Heart left ventricle (tissue), 16 donors: ENCODE measurements at regions of chr1 and their contacts with region 1.

Region 1: DNA sequence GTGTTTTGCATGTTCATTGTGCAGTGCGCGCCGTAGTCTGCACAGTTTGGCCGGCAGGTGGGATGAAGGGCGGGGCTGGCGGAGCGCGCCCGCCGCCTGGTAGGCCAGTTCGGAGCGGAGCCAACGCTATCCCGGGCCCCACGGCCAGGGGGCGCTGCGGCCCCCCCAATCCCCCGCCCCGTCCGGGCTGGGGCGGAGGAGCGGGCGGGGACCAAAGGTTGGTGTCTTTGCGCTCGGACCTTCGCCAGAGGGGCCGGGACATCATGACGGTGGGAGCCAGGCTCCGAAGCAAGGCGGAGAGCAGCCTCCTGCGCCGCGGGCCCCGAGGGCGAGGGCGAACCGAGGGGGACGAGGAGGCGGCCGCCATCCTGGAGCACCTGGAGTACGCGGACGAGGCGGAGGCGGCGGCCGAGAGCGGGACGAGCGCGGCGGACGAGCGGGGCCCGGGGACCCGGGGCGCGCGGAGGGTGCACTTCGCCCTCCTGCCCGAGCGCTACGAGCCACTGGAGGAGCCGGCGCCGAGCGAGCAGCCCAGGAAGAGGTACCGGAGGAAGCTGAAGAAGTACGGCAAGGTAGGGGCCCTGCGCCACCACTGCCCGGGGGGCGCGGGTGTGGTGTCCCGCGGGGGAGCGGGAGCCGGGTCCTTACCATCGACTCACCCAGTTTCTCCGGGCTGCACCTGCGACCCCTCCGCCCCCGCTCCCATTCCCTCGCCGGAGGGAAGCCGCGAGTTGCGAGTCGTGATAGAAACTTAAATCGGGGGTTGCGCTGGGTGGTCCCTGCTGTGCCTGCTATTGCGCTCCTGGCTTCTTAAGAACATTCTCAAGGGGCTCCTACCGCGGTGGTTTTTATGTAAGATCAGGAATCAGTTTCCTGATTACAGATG is at the start of gene C1orf115:
- DNase-seq: peak; percentile 73 to 89 (median 77)
- ATAC-seq: peak; percentile 78 to 98 (median 94)
- H3K4me3 ChIP-seq: peak within 1 kb of the TSS; percentile 64 to 89 (median 82)
- H3K27ac ChIP-seq: peak within 1 kb of the TSS; percentile 11 to 89 (median 70)
- H3K4me1 ChIP-seq: peaks cover 0 to 17% (median 4%) of the 10 kb centered on the region in 12 donors
- H3K27me3 ChIP-seq: no peaks in the 10 kb centered on the region
- CTCF ChIP-seq: peak; percentile 96 to 99 (median 98)
- POLR2A ChIP-seq: peak in 1 of 2 donors; percentile 69
- total RNA-seq, gene C1orf115: 8.5 to 39.0 (median 15.4) TPM

Region 2: GRCh38 chr1:220733090-220733601 is 42.8 kb after region 1 on chr1:
- intact Hi-C with region 1: loop called (anchors 1 to 5 kb)
- DNase-seq: peak; percentile 73 to 86 (median 82)
- ATAC-seq: peak; percentile 92 to 96 (median 96)
- H3K4me3 ChIP-seq: peak overlapping the region in 10 of 12 donors; percentile 10 to 50 (median 38)
- H3K27ac ChIP-seq: peak overlapping the region; percentile 54 to 89 (median 79)
- H3K4me1 ChIP-seq: peaks cover 0 to 21% (median 5%) of the 10 kb centered on the region in 12 donors
- H3K27me3 ChIP-seq: no peaks in the 10 kb centered on the region
- CTCF ChIP-seq: peak; percentile 68 to 95 (median 88)
- POLR2A ChIP-seq: no peak

Region 3: GRCh38 chr1:220748089-220748934 is 57.9 kb after region 1 on chr1 and contains the start of gene MTARC2:
- intact Hi-C with region 1: loop called in 1 of 10 experiments (anchors 1 kb)
- DNase-seq: peak; percentile 87 to 90 (median 89)
- ATAC-seq: peak; percentile 97 to 98 (median 98)
- H3K4me3 ChIP-seq: peak within 1 kb of the TSS; percentile 53 to 100 (median 85)
- H3K27ac ChIP-seq: peak within 1 kb of the TSS; percentile 66 to 98 (median 92)
- H3K4me1 ChIP-seq: peaks cover 4 to 55% (median 36%) of the 10 kb centered on the region in 12 donors
- H3K27me3 ChIP-seq: peaks cover 0 to 4% (median 0%) of the 10 kb centered on the region in 9 donors
- CTCF ChIP-seq: no peak
- POLR2A ChIP-seq: peak in 1 of 2 donors; percentile 94
- total RNA-seq, gene MTARC2: 16.5 to 29.1 (median 24.2) TPM

Region 4: DNA sequence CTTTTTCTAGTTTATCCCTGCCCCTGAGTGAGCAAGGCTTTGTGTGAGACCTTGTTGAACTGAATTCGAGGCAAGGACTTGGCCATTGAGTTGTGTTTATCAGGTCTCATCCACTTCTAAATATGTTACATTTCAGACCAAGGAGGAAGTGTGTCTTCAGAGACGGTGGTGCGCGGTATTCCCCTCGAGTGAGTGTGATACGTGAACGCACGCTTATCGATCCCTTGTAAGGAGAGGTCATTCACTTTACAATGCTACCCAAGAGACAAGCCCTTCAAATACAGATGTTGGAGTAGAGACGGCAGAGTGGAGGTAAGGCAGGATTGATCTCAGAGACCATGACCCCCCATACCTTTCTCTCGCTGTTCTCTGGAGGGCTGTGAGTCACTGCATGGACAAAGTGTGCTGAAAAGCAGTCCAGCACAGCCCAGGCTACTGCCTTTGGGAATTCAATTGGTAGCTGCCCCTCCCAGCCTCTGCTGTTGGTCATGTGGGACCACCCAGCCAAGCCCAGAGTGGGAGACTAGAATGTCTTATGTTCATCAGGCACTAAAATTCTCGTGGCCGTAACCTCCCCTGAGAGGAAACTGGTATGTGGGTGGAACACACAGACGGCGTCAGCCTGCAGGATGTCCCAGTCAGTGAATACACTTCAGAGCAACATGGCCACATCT is 80.0 kb after region 1 on chr1:
- intact Hi-C with region 1: loop called in 2 of 10 experiments (anchors 5 kb)
- DNase-seq: peak in 1 of 5 donors; percentile 39
- ATAC-seq: peak in 3 of 4 donors; percentile 25 to 47 (median 36)
- H3K4me3 ChIP-seq: no peak overlapping the region
- H3K27ac ChIP-seq: peak overlapping the region in 2 of 12 donors; percentile 14 to 40
- H3K4me1 ChIP-seq: peaks cover 0 to 37% (median 17%) of the 10 kb centered on the region in 12 donors
- H3K27me3 ChIP-seq: no peaks in the 10 kb centered on the region
- CTCF ChIP-seq: no peak
- POLR2A ChIP-seq: no peak